CD8-positive, alpha-beta T cell (primary cell): ENCODE measurements at regions of chr5 and their contacts with region 1.

Region 1: DNA sequence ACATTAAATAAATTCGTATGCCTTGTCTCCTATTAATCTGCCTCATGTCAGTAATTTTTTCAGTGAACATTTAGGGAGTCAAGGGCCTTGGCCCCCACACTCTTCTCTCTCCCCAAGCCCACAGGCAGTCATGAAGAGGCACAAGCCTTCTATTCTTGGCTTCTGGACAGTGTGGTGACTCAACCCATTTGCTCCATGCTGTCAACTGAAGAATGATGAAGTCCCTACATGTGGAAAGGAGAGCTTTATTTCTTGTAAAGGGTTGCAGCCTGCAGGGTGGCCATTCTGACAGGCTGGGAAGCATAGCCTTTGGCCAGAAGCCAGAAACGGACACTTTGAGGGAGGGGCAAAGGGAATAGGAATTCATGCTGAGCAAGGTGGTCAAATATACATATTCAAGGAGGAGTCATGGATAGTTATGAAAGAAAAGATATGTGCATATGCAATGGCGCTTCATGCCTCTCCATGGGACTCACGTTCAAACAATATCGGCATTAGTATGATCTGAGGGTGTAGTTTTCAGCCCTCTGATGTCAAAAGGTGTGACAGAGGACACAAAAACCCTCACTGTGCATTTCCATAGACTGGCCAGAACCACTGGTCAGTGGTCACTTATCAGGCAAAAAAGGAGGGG is 31.3 kb downstream of the ANKRA2 start:
- DNase-seq: no peak
- ATAC-seq: no peak
- H3K4me3 ChIP-seq: no peak overlapping the region
- H3K4me3 Mint-ChIP-seq: no peak overlapping the region
- H3K27ac ChIP-seq: no peak overlapping the region
- H3K27ac Mint-ChIP-seq: no peak overlapping the region
- H3K4me1 ChIP-seq: no peaks in the 10 kb centered on the region
- H3K4me1 Mint-ChIP-seq: no peaks in the 10 kb centered on the region
- H3K27me3 ChIP-seq: no peaks in the 10 kb centered on the region
- H3K27me3 Mint-ChIP-seq: peaks cover 32% of the 10 kb centered on the region
- CTCF ChIP-seq: no peak

Region 2: DNA sequence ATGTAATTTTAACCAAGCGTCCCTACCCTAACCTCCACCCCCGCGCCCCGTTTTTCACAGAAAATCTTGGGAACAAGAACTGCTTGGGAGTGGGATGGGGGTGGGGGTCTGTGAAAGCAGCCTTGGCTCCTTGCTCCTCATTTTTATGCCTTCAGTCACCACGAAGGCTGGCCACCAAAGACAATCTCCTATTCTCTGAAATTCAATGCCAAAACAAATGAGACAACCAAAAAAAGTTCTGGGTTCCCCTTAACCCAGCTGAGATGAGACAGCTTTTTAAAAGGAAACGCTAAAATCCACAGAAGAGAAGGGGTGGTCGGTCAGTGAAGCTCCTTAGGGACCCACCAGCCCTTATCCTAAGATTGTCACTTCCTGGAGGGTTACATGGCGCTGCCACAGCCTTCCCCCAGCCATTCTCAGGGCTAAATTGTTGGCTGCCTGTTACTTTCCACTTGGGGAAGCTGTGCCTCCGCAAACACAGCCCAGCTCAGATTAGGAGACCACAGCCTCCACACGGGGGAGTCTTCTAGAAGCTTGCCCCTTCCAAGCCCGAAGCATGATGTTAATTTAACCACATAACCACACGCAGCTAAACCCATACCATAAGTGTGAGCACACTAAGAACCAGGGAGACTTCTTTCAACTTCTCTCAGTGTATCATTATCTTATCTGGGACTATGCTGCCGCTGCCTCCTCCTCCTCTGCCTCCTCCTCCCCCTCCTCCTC is 221.8 kb before region 1 on chr5:
- CTCF ChIA-PET with region 1: no interaction called
- POLR2A ChIA-PET with region 1: no interaction called
- intact Hi-C with region 1: loop called in 1 of 2 experiments (anchors 5 kb)
- DNase-seq: peak in 4 of 9 experiments; percentile 12 to 69 (median 46)
- ATAC-seq: peak; percentile 57
- H3K4me3 ChIP-seq: no peak overlapping the region
- H3K4me3 Mint-ChIP-seq: no peak overlapping the region
- H3K27ac ChIP-seq: no peak overlapping the region
- H3K27ac Mint-ChIP-seq: no peak overlapping the region
- H3K4me1 ChIP-seq: no peaks in the 10 kb centered on the region
- H3K4me1 Mint-ChIP-seq: peaks cover 10% of the 10 kb centered on the region
- H3K27me3 ChIP-seq: peaks cover 11 to 23% of the 10 kb centered on the region in 2 experiments
- H3K27me3 Mint-ChIP-seq: peaks cover 74% of the 10 kb centered on the region
- CTCF ChIP-seq: no peak

Region 3: GRCh38 chr5:73437101-73437776 is 96.9 kb before region 1 on chr5:
- CTCF ChIA-PET with region 1: no interaction called
- POLR2A ChIA-PET with region 1: no interaction called
- intact Hi-C with region 1: no loop called
- DNase-seq: peak in 1 of 9 experiments; percentile 33
- ATAC-seq: no peak
- H3K4me3 ChIP-seq: no peak overlapping the region
- H3K4me3 Mint-ChIP-seq: peak overlapping the region; percentile 59
- H3K27ac ChIP-seq: no peak overlapping the region
- H3K27ac Mint-ChIP-seq: no peak overlapping the region
- H3K4me1 ChIP-seq: peaks cover 15% of the 10 kb centered on the region
- H3K4me1 Mint-ChIP-seq: peaks cover 14% of the 10 kb centered on the region
- H3K27me3 ChIP-seq: peaks cover 48 to 65% of the 10 kb centered on the region in 2 experiments
- H3K27me3 Mint-ChIP-seq: peaks cover 79% of the 10 kb centered on the region
- CTCF ChIP-seq: no peak

Region 4: GRCh38 chr5:74251141-74252035 is 717.3 kb after region 1 on chr5:
- CTCF ChIA-PET with region 1: no interaction called
- POLR2A ChIA-PET with region 1: no interaction called
- intact Hi-C with region 1: no loop called
- DNase-seq: no peak
- ATAC-seq: no peak
- H3K4me3 ChIP-seq: no peak overlapping the region
- H3K4me3 Mint-ChIP-seq: no peak overlapping the region
- H3K27ac ChIP-seq: no peak overlapping the region
- H3K27ac Mint-ChIP-seq: no peak overlapping the region
- H3K4me1 ChIP-seq: no peaks in the 10 kb centered on the region
- H3K4me1 Mint-ChIP-seq: no peaks in the 10 kb centered on the region
- H3K27me3 ChIP-seq: no peaks in the 10 kb centered on the region
- H3K27me3 Mint-ChIP-seq: peaks cover 13% of the 10 kb centered on the region
- CTCF ChIP-seq: no peak